ENCODE measurements at regions of chr2 and their contacts with region 1.

Region 1: DNA sequence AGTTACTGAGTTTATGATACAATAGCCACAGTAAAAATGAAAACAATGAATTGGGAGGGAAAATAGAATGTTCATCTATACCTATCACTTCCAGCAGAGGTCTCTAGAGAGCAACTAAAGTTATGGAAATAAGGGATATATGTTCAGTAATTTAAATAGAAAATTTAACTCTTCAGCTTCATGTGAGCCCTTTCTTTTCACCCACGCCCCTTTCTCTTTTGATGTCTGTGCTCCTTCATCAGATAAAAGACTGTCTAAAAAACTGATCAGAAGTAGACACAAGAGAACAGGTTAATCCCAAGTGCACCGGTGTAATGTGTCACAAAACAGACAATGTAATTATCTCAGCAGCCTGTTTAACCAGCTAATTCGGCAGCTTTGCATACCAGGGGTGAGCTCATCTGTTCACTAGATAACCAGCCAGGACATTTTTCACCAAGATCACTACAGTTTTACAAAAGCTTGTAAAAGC is 238.5 kb upstream of the ERBB4 start:
- DNase-seq: no peak
- H3K4me3 ChIP-seq: no peak overlapping the region
- H3K27ac ChIP-seq: no peak overlapping the region
- H3K4me1 ChIP-seq: no peaks in the 10 kb centered on the region
- H3K27me3 ChIP-seq: no peaks in the 10 kb centered on the region
- CTCF ChIP-seq: peak in 2 of 3 experiments; percentile 16 to 48
- POLR2A ChIP-seq: no peak

Region 2: DNA sequence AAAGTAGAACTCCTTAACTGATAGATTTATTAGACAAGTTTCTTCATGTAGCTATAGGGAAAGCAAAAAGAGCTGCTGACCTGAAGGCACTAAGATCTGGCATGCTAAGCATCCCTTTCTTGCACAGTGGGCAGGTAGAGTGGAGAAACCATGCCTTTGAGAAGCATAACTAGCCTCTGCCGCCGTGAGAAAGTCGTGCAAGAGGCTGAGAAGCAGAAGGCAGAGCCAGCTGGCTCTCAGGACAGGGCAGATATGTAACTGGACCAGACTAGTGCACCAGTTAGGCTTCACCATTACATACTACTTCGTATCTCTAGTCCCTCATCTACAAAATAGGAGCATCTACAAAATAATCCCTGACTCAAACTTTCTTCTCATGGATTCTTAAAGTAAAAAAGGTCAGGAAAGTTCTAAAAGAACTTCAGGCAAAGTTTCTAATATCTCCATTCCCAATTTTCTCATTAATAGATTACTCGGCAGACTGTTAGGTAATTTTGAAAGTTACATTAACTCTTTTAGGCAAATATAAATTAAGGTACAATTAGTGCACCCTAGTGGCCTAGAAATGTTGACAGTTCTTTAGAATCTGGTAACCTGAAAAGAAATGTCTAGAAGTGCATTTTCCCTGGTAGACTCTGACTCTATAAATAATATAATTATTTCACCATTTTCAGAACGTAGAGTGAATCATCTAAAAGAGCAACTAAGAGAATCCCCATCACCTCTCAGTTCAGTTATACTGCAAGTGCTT is 248.8 kb before region 1 on chr2:
- intact Hi-C with region 1: no loop called
- DNase-seq: no peak
- H3K4me3 ChIP-seq: no peak overlapping the region
- H3K27ac ChIP-seq: no peak overlapping the region
- H3K4me1 ChIP-seq: no peaks in the 10 kb centered on the region
- H3K27me3 ChIP-seq: no peaks in the 10 kb centered on the region
- CTCF ChIP-seq: no peak
- POLR2A ChIP-seq: no peak

Region 3: GRCh38 chr2:213151437-213152064 is 374.5 kb after region 1 on chr2 and contains the start of gene IKZF2:
- intact Hi-C with region 1: loop called (anchors 10 kb)
- DNase-seq: peak; percentile 92
- H3K4me3 ChIP-seq: peak within 1 kb of the TSS; percentile 81 to 86
- H3K27ac ChIP-seq: peak within 1 kb of the TSS; percentile 91 to 98
- H3K4me1 ChIP-seq: no peaks in the 10 kb centered on the region
- H3K27me3 ChIP-seq: no peaks in the 10 kb centered on the region
- CTCF ChIP-seq: no peak
- POLR2A ChIP-seq: no peak
- total RNA-seq, gene IKZF2: 9.1 to 11.4 TPM

Measured in testis (tissue), 5 donors.